Mammary epithelial cell (primary cell): ENCODE measurements at regions of chr12 and their contacts with region 1.

Region 1: GRCh38 chr12:23204933-23205778 is 580.2 kb downstream of the ETNK1 start:
- DNase-seq: peak; percentile 37
- H3K4me3 ChIP-seq: no peak overlapping the region
- H3K27ac ChIP-seq: no peak overlapping the region
- H3K4me1 ChIP-seq: no peaks in the 10 kb centered on the region
- H3K27me3 ChIP-seq: no peaks in the 10 kb centered on the region
- CTCF ChIP-seq: peak; percentile 84 to 94

Region 2: GRCh38 chr12:23099604-23100003 is 105.6 kb before region 1 on chr12:
- CTCF ChIA-PET with region 1: no interaction called
- dilution Hi-C with region 1: loop called (anchors 25 kb)
- in situ Hi-C with region 1: no loop called
- intact Hi-C with region 1: no loop called
- DNase-seq: no peak
- H3K4me3 ChIP-seq: no peak overlapping the region
- H3K27ac ChIP-seq: no peak overlapping the region
- H3K4me1 ChIP-seq: peaks cover 22% of the 10 kb centered on the region
- H3K27me3 ChIP-seq: no peaks in the 10 kb centered on the region
- CTCF ChIP-seq: no peak

Region 3: GRCh38 chr12:23222801-23223200 is 17.6 kb after region 1 on chr12:
- CTCF ChIA-PET with region 1: no interaction called
- dilution Hi-C with region 1: no loop called
- in situ Hi-C with region 1: no loop called
- intact Hi-C with region 1: no loop called
- DNase-seq: peak; percentile 29
- H3K4me3 ChIP-seq: no peak overlapping the region
- H3K27ac ChIP-seq: no peak overlapping the region
- H3K4me1 ChIP-seq: no peaks in the 10 kb centered on the region
- H3K27me3 ChIP-seq: no peaks in the 10 kb centered on the region
- CTCF ChIP-seq: no peak

Region 4: DNA sequence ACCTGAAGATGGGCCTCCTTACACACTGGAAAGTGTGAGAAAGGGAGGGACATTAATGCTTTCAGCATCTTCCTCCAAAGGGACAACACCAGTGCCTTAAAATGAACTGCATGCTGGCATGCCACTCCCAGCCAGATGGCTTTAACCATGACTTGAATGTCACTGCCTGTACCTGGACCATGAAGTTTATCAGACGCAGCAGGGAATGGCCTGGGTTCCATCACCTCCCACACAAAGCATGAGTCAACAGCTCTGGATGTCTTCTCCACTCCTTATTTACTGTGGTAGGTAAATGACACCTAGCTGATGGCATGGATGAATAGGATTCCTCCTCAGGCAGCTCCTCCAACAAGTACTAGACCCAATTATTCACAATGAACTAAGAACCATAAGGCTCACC is 98.7 kb after region 1 on chr12:
- CTCF ChIA-PET with region 1: no interaction called
- dilution Hi-C with region 1: no loop called
- in situ Hi-C with region 1: no loop called
- intact Hi-C with region 1: no loop called
- DNase-seq: no peak
- H3K4me3 ChIP-seq: no peak overlapping the region
- H3K27ac ChIP-seq: no peak overlapping the region
- H3K4me1 ChIP-seq: no peaks in the 10 kb centered on the region
- H3K27me3 ChIP-seq: no peaks in the 10 kb centered on the region
- CTCF ChIP-seq: no peak